ENCODE measurements at regions of chr1 and their contacts with region 1.

Region 1: GRCh38 chr1:21270086-21270689 is 20.1 kb downstream of the ECE1 start:
- DNase-seq: no peak
- H3K4me3 ChIP-seq: no peak overlapping the region
- CTCF ChIP-seq: peak; percentile 89

Region 2: DNA sequence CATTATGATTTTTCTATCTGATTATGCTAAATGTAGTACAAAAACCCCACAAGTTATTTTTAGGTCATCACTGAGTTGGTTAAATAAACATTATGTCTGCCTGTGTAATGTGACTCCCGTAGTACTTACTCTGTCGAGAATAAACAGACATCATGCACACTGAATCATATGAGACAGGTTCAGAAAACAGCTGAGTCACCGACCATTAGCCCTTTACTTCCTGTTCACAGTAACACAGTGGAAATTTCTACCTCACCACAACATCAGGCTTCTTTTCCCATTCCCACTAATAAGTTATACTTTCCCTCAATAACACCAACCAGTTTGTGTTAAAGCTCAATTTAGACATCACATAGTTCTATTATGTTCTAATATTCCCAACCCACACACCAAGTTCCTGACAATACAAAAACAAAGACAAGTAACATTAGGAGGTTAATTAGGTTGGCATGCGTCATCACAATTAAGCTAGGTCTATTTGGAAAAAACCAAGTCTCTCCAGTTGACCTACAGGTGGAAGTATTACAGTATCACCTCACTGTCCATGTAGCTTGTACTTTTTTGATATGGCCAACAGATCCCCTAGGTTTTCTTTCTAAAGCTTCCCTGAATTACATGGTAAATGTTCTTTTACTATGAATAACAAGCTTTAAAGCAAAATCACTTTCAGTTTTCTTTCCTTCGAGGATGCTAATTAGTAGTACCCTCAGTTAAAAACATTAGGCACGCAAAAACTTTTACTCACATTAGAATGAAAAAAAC is 247.7 kb before region 1 on chr1:
- CTCF ChIA-PET with region 1: no interaction called
- POLR2A ChIA-PET with region 1: no interaction called
- DNase-seq: peak; percentile 97
- H3K4me3 ChIP-seq: no peak overlapping the region
- CTCF ChIP-seq: no peak

Region 3: GRCh38 chr1:21244986-21245687 is 25.1 kb before region 1 on chr1:
- CTCF ChIA-PET with region 1: interaction called, 10 read pairs
- POLR2A ChIA-PET with region 1: no interaction called
- DNase-seq: no peak
- H3K4me3 ChIP-seq: no peak overlapping the region
- CTCF ChIP-seq: peak; percentile 28

Region 4: GRCh38 chr1:21293537-21294265 is 23.5 kb after region 1 on chr1:
- CTCF ChIA-PET with region 1: interaction called, 25 read pairs
- POLR2A ChIA-PET with region 1: no interaction called
- DNase-seq: no peak
- H3K4me3 ChIP-seq: no peak overlapping the region
- CTCF ChIP-seq: no peak

Region 5: DNA sequence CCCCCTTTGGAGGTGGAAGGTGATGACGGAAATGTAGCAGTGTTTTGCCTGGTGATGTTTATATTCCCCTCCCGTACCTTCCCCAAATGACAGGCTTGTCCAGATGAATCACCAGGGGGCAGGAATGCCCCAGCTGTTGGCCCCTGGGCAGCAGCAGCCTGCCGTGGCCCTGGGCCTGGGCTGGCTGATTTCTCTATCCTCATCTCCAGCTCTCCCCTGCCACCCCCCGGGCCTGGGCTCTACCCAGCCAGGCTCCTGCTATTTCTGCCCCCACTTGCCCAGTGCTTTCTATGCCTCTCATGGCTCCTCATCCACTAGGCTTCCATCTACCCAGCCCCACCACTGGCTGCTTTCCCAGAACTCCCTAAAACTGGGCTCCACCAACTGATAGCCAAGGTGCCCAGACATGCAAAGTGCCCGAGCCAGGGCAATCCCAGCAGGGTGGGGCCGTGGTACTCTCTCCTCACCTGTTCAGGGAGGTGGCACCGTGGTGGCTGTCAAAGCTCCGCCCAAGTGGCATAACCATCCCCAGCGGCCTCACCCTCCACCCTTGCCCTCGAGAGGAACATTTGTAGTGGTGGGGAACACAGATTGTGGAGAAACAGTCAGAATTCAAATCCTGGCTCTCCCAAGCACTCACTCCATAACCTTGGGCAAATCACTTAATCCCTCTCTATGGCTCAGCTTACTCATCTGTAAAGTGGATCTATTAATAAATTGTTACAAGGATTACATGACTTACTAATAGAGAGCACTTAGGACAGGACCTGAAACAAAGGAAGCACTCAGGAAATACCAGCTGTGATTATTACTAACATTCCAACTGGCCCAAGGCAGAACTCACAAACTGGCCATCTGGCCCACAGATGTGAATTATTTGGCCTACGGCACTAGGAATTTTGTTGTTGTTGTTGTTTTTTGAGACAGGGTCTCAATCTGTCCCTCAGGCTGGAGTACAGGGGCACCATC is 32.8 kb after region 1 on chr1:
- CTCF ChIA-PET with region 1: interaction called, 25 read pairs
- POLR2A ChIA-PET with region 1: no interaction called
- DNase-seq: peak; percentile 36
- H3K4me3 ChIP-seq: no peak overlapping the region
- CTCF ChIP-seq: no peak

Region 6: GRCh38 chr1:21324368-21325141 is 54.4 kb after region 1 on chr1:
- CTCF ChIA-PET with region 1: interaction called, 22 read pairs
- POLR2A ChIA-PET with region 1: no interaction called
- DNase-seq: no peak
- H3K4me3 ChIP-seq: peak overlapping the region; percentile 20
- CTCF ChIP-seq: no peak

Region 7: DNA sequence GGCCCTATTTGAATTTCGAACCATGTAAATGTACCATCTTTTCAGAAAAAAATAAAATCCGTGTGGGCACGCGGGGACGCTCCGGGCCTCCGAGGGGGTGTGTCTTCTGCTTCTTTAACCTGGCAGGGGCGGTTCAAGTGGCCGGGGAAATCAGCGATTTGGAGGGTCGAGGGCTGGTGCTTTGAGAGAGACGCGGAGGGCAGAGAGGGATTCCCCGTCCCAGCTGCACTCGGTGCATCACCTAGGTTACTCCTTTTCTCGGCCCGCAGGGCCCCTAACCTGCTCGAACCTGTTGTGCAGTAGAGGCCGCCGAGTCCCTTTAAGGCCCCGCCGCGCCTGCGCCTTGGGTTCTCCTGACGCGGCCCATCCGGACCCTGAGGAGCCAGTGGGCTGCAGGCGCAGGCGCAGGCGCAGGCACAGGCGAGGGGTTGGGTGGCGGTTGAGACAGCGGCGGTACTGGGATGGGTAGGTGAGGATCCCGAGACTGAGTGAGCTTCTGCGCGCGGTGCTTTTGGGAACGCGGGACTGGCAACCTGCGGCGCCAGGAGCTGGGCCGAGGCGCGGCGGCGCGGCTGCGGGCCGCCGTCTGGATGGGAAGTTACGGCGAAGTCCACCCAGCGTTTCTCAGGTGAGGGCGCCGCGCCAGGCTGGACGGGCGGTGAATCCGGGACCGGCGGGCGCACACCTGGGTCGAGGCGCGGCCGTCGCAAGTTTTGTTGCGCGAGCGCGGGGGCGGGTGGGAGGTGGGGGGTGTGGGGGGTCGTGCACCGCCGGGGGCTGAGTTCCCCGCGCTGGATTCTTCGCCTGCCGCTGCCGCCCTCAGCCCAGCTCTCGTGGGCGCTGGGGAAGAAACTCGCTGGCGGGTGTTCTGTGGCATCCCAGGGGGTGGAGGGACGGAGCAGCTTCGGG is 169.8 kb after region 1 on chr1 and contains the start of gene NBPF3:
- CTCF ChIA-PET with region 1: no interaction called
- POLR2A ChIA-PET with region 1: no interaction called
- DNase-seq: peak; percentile 28
- H3K4me3 ChIP-seq: peak within 1 kb of the TSS; percentile 72
- CTCF ChIP-seq: no peak